Tibial artery (tissue), 4 donors: ENCODE measurements at regions of chr9 and their contacts with region 1.

Region 1: GRCh38 chr9:127869310-127870152 is 7.9 kb downstream of the AK1 start:
- DNase-seq: peak; percentile 90 to 93
- H3K4me3 ChIP-seq: no peak overlapping the region
- H3K27ac ChIP-seq: peak overlapping the region in 1 of 2 donors; percentile 20
- H3K4me1 ChIP-seq: peaks cover 0 to 17% (median 15%) of the 10 kb centered on the region in 4 donors
- H3K27me3 ChIP-seq: no peaks in the 10 kb centered on the region
- CTCF ChIP-seq: peak; percentile 82 to 95

Region 2: DNA sequence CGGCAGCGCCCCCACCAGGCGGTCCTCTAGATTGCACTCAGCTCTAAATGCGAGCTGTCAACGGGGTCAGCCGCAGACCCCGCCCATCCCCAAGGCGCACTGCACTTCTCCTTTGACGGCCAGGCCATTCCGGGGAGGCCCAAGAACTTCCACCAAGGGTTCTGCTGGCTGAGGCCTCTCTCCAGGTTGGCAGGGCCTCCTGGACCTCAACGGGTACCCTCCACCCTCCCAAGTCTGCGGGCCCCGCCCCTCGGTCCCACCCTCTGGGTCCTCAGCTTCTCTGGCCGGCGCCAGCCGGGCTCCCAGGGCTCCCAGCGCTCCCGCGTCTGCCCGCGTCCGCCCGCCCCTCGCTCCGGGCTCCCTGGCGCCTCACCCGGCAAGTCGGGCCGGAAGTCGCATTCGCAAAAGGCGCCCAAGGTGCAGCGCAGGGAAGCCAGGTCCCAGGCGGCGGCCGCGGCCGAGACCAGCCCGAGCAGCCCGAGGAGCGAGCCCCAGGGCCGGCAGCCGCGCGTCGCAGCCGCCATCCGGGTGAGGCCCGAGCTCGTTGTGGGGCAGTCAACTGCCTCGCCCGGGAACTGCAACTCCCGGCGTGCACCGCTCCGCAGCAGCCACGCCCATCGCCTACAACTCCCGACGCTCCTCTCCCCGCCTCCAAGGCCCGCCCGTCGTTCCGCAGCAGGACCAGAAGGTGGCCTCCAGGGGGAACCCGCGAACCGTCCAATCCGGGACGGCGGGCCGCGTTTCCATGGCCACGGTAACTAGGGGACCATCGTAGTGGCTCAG is 134.6 kb before region 1 on chr9 and contains the start of gene TOR2A:
- intact Hi-C with region 1: loop called (anchors 5 kb)
- DNase-seq: peak; percentile 94 to 98
- H3K4me3 ChIP-seq: peak within 1 kb of the TSS; percentile 69 to 75
- H3K27ac ChIP-seq: peak within 1 kb of the TSS; percentile 93
- H3K4me1 ChIP-seq: peaks cover 0 to 13% (median 7%) of the 10 kb centered on the region in 4 donors
- H3K27me3 ChIP-seq: no peaks in the 10 kb centered on the region
- CTCF ChIP-seq: peak; percentile 92 to 99

Region 3: DNA sequence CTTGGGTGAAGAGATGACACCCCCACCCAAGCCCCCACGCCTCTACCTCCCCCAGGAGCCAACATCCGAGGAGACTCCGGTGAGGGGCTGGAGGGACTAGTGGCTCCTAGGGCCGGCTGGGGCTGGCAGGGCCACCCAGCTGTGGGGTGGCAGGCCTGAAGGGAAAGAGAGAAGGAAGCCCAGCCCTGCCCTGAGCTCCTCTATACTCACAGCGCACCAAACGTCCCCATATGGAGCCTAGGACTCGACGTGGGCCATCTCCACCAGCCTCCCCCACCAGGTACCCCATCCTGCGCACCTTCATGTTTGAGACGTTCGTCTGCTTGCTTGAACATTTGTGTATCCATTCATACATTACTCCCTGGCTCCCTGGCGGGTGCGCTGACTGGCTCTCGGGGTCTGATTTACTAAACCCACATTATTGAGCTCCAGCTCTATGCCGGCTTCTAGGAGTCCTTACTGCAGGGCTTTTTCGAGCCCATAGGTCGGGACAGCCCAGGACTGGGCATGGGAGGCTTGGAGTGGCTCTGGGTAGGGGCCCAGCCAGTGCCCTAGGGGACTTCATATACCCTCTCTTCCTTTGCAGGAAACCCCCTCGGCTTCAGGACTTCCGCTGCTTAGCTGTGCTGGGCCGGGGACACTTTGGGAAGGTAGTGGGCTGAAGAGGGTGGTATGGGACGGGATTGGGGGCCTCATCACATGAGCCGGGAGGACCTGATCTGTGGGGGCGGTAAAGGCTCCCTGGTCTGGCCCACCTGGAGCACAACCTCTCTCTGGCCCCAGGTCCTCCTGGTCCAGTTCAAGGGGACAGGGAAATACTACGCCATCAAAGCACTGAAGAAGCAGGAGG is 845.3 kb after region 1 on chr9:
- intact Hi-C with region 1: no loop called
- DNase-seq: peak in 1 of 2 donors; percentile 51
- H3K4me3 ChIP-seq: no peak overlapping the region
- H3K27ac ChIP-seq: no peak overlapping the region
- H3K4me1 ChIP-seq: no peaks in the 10 kb centered on the region
- H3K27me3 ChIP-seq: no peaks in the 10 kb centered on the region
- CTCF ChIP-seq: no peak